ENCODE measurements at regions of chr4 and their contacts with region 1.

Region 1: DNA sequence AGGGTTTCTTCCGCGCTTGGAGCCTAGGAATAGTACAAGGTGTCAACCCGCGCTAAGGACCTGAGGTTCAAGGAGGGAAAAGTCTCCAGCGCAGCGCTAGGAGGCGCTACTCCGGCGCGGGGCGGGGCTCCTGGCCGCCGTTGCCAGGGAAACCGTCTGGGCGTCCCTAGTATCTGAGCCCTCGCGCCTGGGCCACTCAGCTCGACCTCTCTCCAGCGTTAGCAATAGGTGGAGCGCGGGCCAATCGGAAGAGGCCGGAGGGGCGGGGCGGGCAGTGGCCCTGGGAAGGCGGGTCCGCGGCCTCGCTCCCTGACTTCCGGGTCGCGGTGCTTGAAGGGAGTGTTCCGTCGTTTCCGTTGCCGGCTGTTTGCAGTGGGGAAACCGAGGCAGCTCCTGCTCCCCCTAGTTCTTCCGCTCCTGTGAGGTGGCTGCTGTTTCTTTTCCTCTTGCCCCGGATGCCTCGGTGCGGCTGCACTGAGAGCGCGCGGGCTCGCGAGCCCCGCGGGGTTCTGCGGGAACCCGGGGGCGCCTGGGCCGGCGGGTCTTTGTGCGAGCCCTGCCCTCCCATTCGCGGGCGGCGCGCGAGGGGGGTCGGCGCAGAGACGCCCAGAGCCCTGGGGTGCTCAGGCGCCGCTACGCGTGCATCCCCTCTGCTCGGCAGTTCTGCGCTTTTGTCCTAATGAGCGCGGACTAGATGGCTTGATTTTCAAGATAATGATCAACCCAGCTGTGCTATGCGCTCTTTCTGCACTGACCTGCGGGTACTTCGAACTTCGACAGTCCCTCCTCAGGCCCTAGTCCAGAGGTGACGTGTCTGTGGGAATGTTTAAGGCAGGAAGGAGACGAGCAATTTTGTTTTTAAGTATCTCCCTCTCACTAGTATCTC is at the start of gene ELMOD2:
- DNase-seq: peak; percentile 98
- H3K4me3 Mint-ChIP-seq: peak within 1 kb of the TSS; percentile 84
- H3K27ac Mint-ChIP-seq: peak within 1 kb of the TSS; percentile 54
- H3K4me1 Mint-ChIP-seq: peaks cover 23% of the 10 kb centered on the region
- H3K27me3 Mint-ChIP-seq: no peaks in the 10 kb centered on the region
- total RNA-seq, gene ELMOD2: 15.5 to 17.3 TPM

Region 2: DNA sequence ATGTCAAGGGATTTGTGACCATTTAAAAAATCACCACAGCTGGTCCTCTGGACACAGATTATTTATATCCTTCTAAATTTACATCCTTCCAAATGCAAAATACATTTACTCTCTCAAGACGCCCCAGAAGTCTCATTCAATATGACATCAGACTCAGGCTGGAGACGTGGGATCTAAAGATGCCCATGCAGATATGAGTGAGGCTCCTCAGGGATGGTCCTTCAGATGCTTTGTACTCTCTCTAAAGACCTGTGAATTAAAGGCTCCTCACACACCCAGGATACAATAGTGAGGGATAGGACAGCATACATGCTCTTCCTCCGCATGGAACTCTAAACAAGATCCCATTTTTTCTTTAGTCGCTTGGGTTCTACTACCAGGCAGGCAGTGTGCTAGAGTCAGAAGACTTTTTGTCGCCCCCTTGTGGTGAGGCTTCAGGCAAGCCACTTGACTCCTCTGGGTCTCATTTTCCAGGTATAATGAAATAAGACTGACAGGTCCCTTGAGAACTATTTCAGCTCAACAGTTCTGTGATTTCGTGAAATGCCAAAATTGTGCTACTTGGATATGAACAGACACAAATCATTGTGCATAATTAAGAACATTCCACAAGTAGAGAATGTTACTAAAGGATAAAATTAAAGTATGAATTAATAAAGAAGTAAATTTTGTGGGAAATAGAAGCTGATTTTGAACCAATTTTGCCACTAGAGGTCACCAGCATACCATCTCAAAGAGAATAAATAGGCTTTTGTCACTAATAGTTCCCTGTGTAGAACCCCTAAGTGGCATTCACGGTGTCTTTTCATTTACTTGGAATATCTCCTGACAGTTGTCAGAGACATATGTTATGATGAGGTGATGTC is 164.3 kb before region 1 on chr4:
- CTCF ChIA-PET with region 1: interaction called, 3 read pairs
- POLR2A ChIA-PET with region 1: no interaction called
- intact Hi-C with region 1: loop called (anchors 1 kb)
- DNase-seq: peak; percentile 81
- H3K4me3 Mint-ChIP-seq: no peak overlapping the region
- H3K27ac Mint-ChIP-seq: no peak overlapping the region
- H3K4me1 Mint-ChIP-seq: no peaks in the 10 kb centered on the region
- H3K27me3 Mint-ChIP-seq: peaks cover 3% of the 10 kb centered on the region

Region 3: DNA sequence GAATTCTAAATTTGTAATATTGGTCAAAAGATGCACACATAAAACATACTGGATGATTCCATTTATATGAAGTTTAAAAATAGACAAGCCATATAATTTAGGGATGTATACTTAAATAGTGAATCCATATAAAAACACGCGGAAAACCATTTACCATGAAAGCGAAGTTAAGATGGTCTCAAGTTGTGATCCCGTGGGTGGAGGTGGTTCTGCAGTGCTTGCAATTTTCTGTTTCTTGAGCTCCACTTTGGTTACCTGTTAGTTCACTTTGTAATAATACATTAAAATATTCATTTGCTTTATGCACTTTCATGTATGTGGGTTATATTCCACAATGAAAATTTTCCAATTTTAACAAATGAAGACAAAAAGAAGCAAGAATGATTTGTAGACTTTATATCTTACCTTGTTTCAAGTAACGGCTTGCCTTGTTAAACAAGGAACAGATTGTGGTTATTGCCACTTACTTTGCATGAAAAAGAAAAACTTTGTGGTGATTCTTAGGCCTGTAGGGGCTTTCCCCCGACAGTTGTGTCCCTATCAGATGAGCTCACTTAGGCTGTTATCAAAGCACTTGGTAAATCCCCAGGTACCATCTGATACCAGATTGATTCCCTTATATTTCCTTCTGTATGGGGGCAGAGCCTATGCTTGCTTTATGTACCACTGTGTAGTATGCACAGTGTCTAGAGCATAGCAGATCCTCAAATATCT is 32.4 kb after region 1 on chr4:
- CTCF ChIA-PET with region 1: interaction called, 5 read pairs
- POLR2A ChIA-PET with region 1: no interaction called
- intact Hi-C with region 1: loop called (anchors 1 kb)
- DNase-seq: peak; percentile 38
- H3K4me3 Mint-ChIP-seq: no peak overlapping the region
- H3K27ac Mint-ChIP-seq: no peak overlapping the region
- H3K4me1 Mint-ChIP-seq: peaks cover 16% of the 10 kb centered on the region
- H3K27me3 Mint-ChIP-seq: peaks cover 5% of the 10 kb centered on the region

Region 4: DNA sequence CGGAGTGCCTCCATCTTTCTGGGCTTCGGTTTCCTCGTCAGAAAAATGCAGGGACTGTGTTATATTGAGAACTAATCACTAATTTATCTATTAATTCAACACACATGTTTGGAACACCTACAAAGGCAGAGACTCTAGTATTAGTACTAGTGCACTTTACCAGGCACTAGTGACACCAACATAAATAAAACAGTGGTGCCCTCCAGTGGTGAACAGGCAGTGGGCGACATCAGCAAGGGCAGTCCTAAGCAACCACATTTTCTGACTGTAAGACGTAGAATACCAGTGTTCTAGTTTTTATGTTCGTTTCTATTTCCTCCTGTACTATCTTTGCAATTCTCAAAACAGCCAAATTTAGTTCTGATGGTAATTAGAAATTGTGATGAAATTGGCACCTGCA is 113.7 kb after region 1 on chr4:
- CTCF ChIA-PET with region 1: interaction called, 3 read pairs
- POLR2A ChIA-PET with region 1: no interaction called
- intact Hi-C with region 1: loop called (anchors 2 kb)
- DNase-seq: peak; percentile 51
- H3K4me3 Mint-ChIP-seq: no peak overlapping the region
- H3K27ac Mint-ChIP-seq: no peak overlapping the region
- H3K4me1 Mint-ChIP-seq: no peaks in the 10 kb centered on the region
- H3K27me3 Mint-ChIP-seq: peaks cover 9% of the 10 kb centered on the region

Region 5: DNA sequence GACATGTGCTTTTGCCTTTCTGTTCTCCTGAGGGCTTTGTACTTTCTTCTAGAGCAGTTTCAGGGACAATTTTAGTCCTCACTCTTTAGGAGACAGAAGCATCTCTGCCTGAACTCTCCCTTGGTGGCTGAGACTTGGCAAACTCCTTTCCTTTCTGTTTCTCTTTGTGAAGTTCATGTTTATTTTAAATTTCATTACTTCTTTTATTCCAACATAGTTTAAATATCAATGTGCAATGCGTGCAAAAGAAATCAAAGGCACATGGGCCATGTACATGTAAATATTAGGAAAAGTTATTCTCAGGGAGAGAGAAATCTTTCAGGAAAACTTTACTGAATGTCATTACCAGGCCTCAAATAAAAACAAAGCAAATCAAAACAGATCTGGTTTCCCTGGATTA is 431.5 kb after region 1 on chr4:
- CTCF ChIA-PET with region 1: no interaction called
- POLR2A ChIA-PET with region 1: no interaction called
- intact Hi-C with region 1: no loop called
- DNase-seq: no peak
- H3K4me3 Mint-ChIP-seq: no peak overlapping the region
- H3K27ac Mint-ChIP-seq: no peak overlapping the region
- H3K4me1 Mint-ChIP-seq: no peaks in the 10 kb centered on the region
- H3K27me3 Mint-ChIP-seq: peaks cover 1% of the 10 kb centered on the region

Region 6: GRCh38 chr4:141220655-141221605 is 696.8 kb after region 1 on chr4 and contains the start of gene ZNF330:
- CTCF ChIA-PET with region 1: no interaction called
- POLR2A ChIA-PET with region 1: no interaction called
- intact Hi-C with region 1: loop called (anchors 5 kb)
- DNase-seq: peak; percentile 91
- H3K4me3 Mint-ChIP-seq: peak within 1 kb of the TSS; percentile 91
- H3K27ac Mint-ChIP-seq: peak within 1 kb of the TSS; percentile 90
- H3K4me1 Mint-ChIP-seq: peaks cover 33% of the 10 kb centered on the region
- H3K27me3 Mint-ChIP-seq: peaks cover 3% of the 10 kb centered on the region
- total RNA-seq, gene ZNF330: 60.3 to 62.6 TPM

Measured in activated CD4-positive, alpha-beta memory T cell treated with anti-CD3 and anti-CD28 coated beads for 36 hours (primary cell).